ENCODE measurements at regions of chr3 and their contacts with region 1.

Region 1: GRCh38 chr3:152205097-152205593 is 63.6 kb upstream of the MBNL1 start:
- DNase-seq: no peak
- H3K4me3 Mint-ChIP-seq: peak overlapping the region; percentile 79
- H3K27ac Mint-ChIP-seq: peak overlapping the region; percentile 89
- H3K4me1 Mint-ChIP-seq: peaks cover 58% of the 10 kb centered on the region
- H3K27me3 Mint-ChIP-seq: no peaks in the 10 kb centered on the region

Region 2: DNA sequence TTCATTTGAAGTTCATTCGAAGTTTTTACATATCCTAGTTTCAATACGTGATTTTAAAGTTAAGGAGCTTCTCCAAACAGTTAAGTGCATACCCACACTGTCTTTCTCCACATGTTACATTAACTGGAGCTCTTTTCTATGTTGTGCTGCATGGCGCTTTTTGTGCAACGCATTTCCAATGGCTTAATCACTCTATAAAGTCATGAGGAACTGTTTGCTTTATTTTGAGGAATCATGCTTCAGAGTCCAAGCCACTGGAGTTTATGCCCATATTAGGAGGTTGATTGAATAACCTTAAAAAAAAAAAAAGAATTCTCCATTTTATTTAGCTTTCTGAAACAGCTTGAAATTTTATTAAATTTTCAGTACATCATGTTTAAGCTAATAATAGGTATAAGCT is 45.8 kb before region 1 on chr3:
- CTCF ChIA-PET with region 1: no interaction called
- POLR2A ChIA-PET with region 1: no interaction called
- intact Hi-C with region 1: no loop called
- DNase-seq: no peak
- H3K4me3 Mint-ChIP-seq: no peak overlapping the region
- H3K27ac Mint-ChIP-seq: no peak overlapping the region
- H3K4me1 Mint-ChIP-seq: no peaks in the 10 kb centered on the region
- H3K27me3 Mint-ChIP-seq: no peaks in the 10 kb centered on the region

Region 3: GRCh38 chr3:152222327-152222726 is 17.2 kb after region 1 on chr3:
- CTCF ChIA-PET with region 1: interaction called, 3 read pairs
- POLR2A ChIA-PET with region 1: interaction called, 7 read pairs
- intact Hi-C with region 1: loop called (anchors 2 kb)
- DNase-seq: no peak
- H3K4me3 Mint-ChIP-seq: peak overlapping the region; percentile 42
- H3K27ac Mint-ChIP-seq: peak overlapping the region; percentile 77
- H3K4me1 Mint-ChIP-seq: peaks cover 72% of the 10 kb centered on the region
- H3K27me3 Mint-ChIP-seq: no peaks in the 10 kb centered on the region

Region 4: DNA sequence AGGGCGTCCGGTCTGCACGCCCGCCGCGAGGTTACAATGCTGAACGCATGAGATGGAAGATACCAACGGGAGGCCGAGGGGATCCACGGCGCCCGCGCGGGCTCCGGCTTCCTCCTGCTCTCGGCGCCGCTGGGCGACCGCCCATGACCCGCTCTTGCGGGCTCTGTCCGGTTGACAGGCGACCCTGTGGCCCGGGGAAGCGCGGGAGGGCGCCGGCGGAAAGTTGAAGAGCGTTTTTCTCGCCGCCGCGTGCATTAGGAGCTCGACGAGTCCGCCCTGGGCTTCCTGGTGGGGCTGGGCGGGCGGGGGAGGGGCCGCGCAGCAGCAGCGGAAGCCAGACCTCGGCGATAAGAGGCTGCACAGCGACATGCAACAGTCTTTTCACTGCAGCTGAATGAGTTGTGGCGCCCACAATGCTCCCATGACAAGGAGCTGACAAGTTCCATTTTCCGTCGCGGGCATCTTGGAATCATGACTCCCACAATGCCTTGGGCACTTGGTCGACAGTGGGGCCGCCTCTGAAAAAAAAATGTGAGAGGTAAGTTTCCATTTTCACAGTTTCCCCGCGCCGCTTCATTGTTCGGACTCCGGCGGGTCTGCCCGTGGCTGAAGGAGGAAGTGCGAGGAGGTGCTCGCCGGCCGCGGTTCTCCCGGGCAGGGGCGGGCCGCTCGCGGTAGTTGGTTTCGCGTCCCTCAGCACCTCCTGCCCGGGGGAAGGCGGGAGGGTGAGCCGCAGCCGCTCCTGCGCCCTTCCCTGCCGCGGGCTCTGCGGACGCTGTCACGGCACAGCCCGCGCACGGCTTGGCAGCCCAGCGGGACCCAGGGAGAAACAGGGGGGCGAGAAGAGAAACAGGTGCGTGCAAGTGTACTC is 63.6 kb after region 1 on chr3 and contains the start of gene MBNL1:
- CTCF ChIA-PET with region 1: interaction called, 5 read pairs
- POLR2A ChIA-PET with region 1: interaction called, 44 read pairs
- intact Hi-C with region 1: no loop called
- DNase-seq: peak; percentile 93
- H3K4me3 Mint-ChIP-seq: peak within 1 kb of the TSS; percentile 84
- H3K27ac Mint-ChIP-seq: peak within 1 kb of the TSS; percentile 84
- H3K4me1 Mint-ChIP-seq: peaks cover 52% of the 10 kb centered on the region
- H3K27me3 Mint-ChIP-seq: no peaks in the 10 kb centered on the region
- total RNA-seq, gene MBNL1: 290 to 302 TPM

Region 5: DNA sequence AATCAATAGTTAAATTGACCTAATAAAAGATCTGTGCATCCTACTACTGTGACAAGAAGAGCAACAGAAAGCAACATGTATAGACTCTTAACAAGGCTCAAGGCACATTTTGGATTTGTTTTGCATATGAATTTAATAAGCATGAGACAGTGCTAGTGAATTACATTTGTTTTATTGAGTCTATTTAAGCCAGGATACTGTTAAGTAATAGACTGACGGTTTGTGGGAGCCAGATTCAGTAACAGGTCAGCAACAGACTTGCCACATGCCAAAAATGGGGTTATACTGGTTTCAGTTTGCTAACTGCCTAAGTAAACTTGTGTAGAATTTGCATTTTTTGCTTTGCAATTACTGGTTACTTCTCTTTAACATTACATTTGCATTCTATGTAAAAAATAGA is 117.6 kb after region 1 on chr3:
- CTCF ChIA-PET with region 1: interaction called, 3 read pairs
- POLR2A ChIA-PET with region 1: interaction called, 5 read pairs
- intact Hi-C with region 1: loop called (anchors 2 kb)
- DNase-seq: no peak
- H3K4me3 Mint-ChIP-seq: no peak overlapping the region
- H3K27ac Mint-ChIP-seq: peak overlapping the region; percentile 24
- H3K4me1 Mint-ChIP-seq: peaks cover 82% of the 10 kb centered on the region
- H3K27me3 Mint-ChIP-seq: no peaks in the 10 kb centered on the region